Gastrocnemius medialis (tissue), 4 donors: ENCODE measurements at regions of chr11 and their contacts with region 1.

Region 1: GRCh38 chr11:87290304-87290922 is 252.7 kb downstream of the TMEM135 start:
- DNase-seq: no peak
- ATAC-seq: peak in 1 of 2 donors; percentile 39
- H3K4me3 ChIP-seq: no peak overlapping the region
- H3K27ac ChIP-seq: no peak overlapping the region
- H3K4me1 ChIP-seq: no peaks in the 10 kb centered on the region
- H3K27me3 ChIP-seq: no peaks in the 10 kb centered on the region
- CTCF ChIP-seq: peak; percentile 50 to 73 (median 64)
- POLR2A ChIP-seq: no peak

Region 2: GRCh38 chr11:86869966-86870570 is 420.3 kb before region 1 on chr11:
- in situ Hi-C with region 1: loop called in 1 of 4 experiments (anchors 10 kb)
- intact Hi-C with region 1: loop called (anchors 1 kb)
- DNase-seq: peak; percentile 17 to 24
- ATAC-seq: peak; percentile 82 to 84
- H3K4me3 ChIP-seq: no peak overlapping the region
- H3K27ac ChIP-seq: no peak overlapping the region
- H3K4me1 ChIP-seq: no peaks in the 10 kb centered on the region
- H3K27me3 ChIP-seq: no peaks in the 10 kb centered on the region
- CTCF ChIP-seq: peak; percentile 42 to 77 (median 70)
- POLR2A ChIP-seq: no peak

Region 3: DNA sequence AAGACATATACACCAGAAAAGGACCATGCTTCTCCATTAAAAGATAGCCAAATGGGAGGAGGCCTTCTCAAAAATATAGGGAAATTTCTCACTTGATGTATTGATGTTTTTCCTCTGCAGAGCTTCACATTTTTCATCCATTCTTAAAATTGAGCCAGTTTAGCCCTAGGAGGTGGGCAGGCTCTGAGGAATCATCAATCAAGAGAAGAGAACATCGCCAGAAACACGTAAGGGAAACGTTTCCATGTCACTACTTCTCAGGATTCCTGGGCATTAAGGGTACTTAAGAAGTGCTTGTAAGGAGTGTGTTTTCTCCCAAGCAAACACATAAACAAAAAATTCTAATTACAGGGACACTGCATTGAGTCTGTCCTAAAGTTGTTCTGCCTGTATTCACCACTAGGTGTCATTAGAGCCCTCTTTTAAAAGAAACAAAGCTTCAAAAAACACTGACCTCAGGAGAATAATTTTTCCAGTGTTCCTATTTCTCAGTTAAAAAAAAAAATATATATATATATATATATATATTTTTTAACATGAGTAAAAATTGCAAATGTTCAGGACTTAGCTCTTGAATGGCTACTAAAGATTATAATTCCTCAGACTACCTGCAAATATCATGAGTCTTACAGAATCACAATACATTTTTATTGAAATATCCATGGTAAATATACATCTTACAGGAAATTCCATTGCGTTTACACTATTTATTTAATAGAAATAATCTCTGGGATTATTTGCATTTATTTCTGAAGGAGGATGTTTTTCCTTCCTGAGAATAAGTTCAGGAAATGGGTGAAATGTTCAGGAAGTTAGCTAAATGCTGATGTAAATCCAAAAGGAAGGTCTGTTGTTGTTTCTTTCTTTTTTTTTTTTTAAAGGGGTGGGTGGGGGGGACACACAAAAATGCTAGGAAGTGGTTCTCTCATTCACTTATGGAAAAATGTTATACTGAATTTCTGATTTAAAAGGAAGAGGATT is 351.2 kb before region 1 on chr11:
- in situ Hi-C with region 1: loop called in 3 of 4 experiments (anchors 5 kb)
- intact Hi-C with region 1: loop called (anchors 1 kb)
- DNase-seq: no peak
- ATAC-seq: peak in 1 of 2 donors; percentile 33
- H3K4me3 ChIP-seq: peak overlapping the region in 2 of 4 donors; percentile 40 to 54
- H3K27ac ChIP-seq: peak overlapping the region; percentile 74 to 85 (median 82)
- H3K4me1 ChIP-seq: peaks cover 47 to 50% of the 10 kb centered on the region in 2 donors
- H3K27me3 ChIP-seq: no peaks in the 10 kb centered on the region
- CTCF ChIP-seq: peak; percentile 63 to 77 (median 68)
- POLR2A ChIP-seq: no peak

Region 4: GRCh38 chr11:87063982-87064381 is 226.4 kb before region 1 on chr11:
- in situ Hi-C with region 1: loop called in 1 of 4 experiments (anchors 25 kb)
- intact Hi-C with region 1: no loop called
- DNase-seq: no peak
- ATAC-seq: no peak
- H3K4me3 ChIP-seq: no peak overlapping the region
- H3K27ac ChIP-seq: no peak overlapping the region
- H3K4me1 ChIP-seq: no peaks in the 10 kb centered on the region
- H3K27me3 ChIP-seq: no peaks in the 10 kb centered on the region
- CTCF ChIP-seq: no peak
- POLR2A ChIP-seq: no peak

Region 5: GRCh38 chr11:87352759-87353707 is 62.6 kb after region 1 on chr11:
- in situ Hi-C with region 1: no loop called
- intact Hi-C with region 1: no loop called
- DNase-seq: peak; percentile 58 to 64
- ATAC-seq: peak; percentile 86 to 91
- H3K4me3 ChIP-seq: peak overlapping the region in 1 of 4 donors; percentile 31
- H3K27ac ChIP-seq: no peak overlapping the region
- H3K4me1 ChIP-seq: peaks cover 0 to 21% of the 10 kb centered on the region in 2 donors
- H3K27me3 ChIP-seq: no peaks in the 10 kb centered on the region
- CTCF ChIP-seq: peak; percentile 95 to 100 (median 98)
- POLR2A ChIP-seq: no peak